Left cardiac atrium (tissue), 4 donors: ENCODE measurements at regions of chr11 and their contacts with region 1.

Region 1: DNA sequence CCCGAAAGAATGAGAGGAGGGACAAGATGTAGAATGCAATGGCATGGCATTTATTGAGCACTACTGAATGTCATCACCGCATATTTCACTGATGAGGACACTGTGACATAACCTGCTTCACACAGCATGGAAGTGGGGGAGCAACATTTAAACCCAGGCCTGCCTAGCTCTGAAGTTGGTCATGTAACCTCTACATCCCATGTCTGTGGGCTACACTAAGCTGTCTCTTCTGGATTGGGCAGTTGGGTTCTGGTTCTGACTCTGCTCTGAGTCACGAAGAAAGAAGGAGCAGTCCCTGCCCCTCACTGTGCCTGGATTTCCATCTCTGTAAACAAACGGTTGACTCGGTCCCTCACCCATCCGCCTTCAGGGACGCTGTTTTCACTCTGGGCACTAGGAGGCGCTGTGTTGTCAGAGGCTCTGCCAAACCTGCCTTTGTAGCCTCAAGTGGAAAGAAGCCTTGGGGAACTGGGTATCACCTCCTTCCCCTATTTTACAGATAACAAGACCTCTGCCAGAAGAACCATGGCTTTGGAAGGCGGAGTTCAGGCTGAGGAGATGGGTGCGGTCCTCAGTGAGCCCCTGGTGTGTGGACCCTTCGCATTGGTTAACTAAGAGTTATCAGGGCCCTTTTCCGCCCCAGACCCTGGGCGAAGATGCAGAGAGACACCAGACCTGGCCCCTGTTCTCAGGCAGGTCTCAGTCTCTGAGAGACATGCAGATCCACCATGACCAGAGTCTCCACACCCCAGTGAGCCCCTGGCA is 12.7 kb upstream of the ARHGEF17 start:
- DNase-seq: peak; percentile 68
- ATAC-seq: peak in 1 of 2 donors; percentile 31

Region 2: GRCh38 chr11:73193773-73194507 is 101.5 kb before region 1 on chr11:
- intact Hi-C with region 1: loop called in 1 of 2 experiments (anchors 5 kb)
- DNase-seq: no peak
- ATAC-seq: no peak

Region 3: DNA sequence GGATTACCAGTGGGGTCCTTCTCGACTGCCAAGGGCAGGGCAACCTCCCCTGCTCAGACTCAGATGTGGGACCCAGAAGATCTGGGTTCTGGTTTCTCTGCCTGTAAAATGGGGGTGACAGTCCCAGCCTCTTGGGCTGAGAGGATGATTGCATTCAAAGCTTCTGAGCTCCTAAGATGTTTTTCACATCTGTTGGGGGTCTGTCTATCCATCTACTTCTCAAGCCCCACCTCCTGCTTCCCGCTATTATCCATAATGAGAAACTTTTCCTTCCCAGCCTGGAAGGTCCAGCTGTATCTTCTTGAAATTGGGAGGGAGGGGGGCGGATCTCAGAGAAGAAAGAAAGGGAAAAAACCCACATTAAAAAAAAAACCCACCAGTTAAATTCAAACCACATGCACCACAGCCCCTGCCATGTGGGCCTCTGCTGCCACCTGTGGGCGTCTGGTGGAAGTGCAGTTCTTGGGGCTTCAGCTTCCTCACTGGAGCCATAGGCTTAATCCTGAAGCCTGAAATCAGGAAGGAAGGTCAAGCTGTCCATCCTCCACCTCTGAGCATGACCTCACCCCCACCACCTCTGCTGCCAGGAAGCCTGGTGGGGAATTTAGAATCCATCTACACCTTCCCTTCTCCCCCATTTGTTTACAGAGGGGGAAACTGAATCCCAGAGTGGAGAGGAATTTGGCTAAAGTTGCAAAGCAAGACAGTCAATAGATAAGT is 40.0 kb after region 1 on chr11:
- intact Hi-C with region 1: loop called (anchors 5 kb)
- DNase-seq: peak; percentile 80
- ATAC-seq: peak; percentile 67 to 70

Region 4: DNA sequence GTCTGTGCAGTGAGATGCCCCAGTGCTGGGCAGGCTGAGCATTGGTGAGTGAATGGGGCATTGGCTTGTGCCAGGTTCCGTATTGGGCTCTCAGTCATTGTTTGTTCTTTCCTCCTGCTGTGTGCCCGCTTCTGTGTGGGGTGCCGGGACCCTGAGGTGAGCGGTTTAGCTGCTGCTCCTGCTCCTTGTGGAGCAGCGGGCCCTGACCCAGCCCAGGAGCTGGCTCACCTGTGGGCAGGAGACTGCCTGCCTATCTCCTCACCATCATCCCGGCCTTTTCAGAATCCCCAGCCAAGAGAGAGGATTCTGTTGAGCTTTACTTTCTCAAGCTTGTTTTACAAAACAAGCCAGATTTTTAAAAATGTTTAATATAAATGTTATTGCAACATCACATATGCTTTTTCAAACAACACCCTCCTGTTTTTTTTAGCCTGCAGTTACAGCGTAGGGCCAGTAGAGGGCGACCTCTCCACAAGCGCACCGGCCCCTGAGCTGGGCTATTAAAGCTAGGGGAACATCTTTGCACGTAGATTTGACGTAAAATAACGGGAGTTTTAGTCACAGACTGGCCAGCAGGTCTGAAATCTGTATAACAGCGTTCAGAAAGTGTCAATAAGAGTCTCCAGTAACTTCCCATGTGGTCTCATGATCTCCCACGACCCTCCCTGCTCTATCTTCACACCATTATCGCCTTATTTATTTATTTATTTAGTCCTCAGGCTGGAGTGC is 55.7 kb after region 1 on chr11:
- intact Hi-C with region 1: no loop called
- DNase-seq: peak; percentile 61
- ATAC-seq: peak; percentile 49 to 58

Region 5: DNA sequence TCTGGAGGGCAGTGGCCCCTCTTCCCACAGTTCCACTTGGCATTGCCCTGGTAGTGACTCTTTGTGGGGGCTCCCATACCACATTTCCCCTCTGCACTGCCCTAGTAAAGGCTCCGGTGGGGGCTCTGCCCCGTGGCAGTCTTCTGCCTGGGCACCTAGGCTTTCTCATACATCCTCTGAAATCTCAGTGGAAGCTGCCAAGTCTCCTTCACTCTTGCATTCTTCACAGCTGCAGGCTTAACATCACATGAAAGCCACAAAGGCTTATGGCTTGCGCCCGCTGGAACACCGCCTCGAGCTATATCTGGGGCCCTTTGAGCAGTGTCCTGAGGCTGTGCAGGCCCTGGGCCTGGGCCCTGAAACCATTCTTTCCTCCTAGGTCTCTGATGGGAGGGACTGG is 376.3 kb after region 1 on chr11:
- intact Hi-C with region 1: no loop called
- DNase-seq: peak; percentile 31
- ATAC-seq: peak; percentile 80 to 81